Psoas muscle (tissue), 8 donors: ENCODE measurements at regions of chr1 and their contacts with region 1.

Region 1: GRCh38 chr1:166785987-166786386 is 53.3 kb upstream of the POGK start:
- DNase-seq: no peak
- ATAC-seq: no peak
- H3K4me3 ChIP-seq: no peak overlapping the region
- H3K27ac ChIP-seq: no peak overlapping the region
- H3K4me1 ChIP-seq: no peaks in the 10 kb centered on the region
- H3K27me3 ChIP-seq: no peaks in the 10 kb centered on the region
- CTCF ChIP-seq: peak; percentile 23

Region 2: DNA sequence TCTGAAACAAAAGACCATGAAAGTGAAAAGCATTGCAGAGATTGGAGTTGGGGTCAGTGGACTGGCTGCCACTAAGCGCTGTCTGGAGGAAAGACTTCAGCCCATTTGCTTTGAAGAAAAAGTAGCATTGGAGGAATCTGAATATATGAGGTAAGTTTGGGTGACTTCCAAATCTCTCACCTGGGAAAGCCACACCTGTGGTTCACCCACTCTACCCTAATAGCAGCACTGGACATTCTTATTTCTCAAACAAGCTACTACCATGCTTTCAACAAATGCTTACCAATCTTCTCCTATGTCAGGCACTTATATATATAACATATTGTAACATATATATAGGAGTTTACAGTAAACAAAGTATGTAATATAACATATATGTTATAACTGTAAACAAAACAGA is 22.7 kb before region 1 on chr1:
- intact Hi-C with region 1: loop called in 1 of 2 experiments (anchors 1 kb)
- DNase-seq: no peak
- ATAC-seq: no peak
- H3K4me3 ChIP-seq: no peak overlapping the region
- H3K27ac ChIP-seq: no peak overlapping the region
- H3K4me1 ChIP-seq: no peaks in the 10 kb centered on the region
- H3K27me3 ChIP-seq: peaks cover 0 to 4% (median 3%) of the 10 kb centered on the region in 3 donors
- CTCF ChIP-seq: no peak